CD14-positive monocyte (primary cell): ENCODE measurements at regions of chr18 and their contacts with region 1.

Region 1: DNA sequence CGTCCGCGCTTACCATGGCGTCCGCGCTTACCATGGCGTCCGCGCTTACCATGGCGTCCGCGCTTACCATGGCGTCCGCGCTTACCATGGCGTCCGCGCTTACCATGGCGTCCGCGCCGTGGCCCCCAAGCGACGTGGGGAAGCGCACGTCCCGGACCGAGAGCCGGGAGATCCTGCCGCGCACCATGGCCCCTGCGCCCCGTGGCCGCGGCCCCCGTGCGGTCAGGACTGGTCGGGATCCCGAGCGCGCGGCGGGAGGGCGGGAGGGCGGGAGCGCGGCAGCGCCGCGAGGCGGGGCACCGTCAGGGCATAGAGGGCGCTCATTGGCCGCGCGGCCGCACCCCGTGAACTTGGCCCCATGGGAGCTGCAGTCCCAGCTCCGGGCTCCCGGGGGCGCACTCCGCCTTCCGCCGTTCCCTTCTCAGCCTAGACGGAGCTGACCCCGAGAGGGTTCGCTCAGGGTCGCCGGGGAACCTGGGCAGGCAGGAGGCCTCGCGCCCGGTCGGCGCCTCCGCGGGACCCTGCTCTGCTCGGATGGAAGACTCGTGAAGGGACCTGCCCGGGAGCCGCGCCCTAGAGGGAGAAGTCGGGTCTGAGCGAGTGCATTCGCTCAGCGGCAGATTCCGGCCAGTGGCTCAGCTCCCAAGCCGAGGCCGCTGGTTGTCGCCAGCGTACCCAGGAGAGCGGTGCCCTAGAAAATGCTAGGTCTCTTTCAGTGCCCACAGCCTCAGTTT is at the start of gene ENOSF1:
- DNase-seq: peak; percentile 55 to 78 (median 73)
- H3K4me3 ChIP-seq: peak within 1 kb of the TSS; percentile 64 to 91 (median 77)
- H3K4me3 Mint-ChIP-seq: peak within 1 kb of the TSS; percentile 86 to 92
- H3K27ac ChIP-seq: peak within 1 kb of the TSS; percentile 40 to 78
- H3K27ac Mint-ChIP-seq: peak within 1 kb of the TSS; percentile 69 to 98 (median 93)
- H3K4me1 ChIP-seq: peaks cover 6 to 13% of the 10 kb centered on the region in 2 donors
- H3K4me1 Mint-ChIP-seq: peaks cover 7% of the 10 kb centered on the region
- H3K27me3 ChIP-seq: peaks cover 7 to 31% of the 10 kb centered on the region in 2 donors
- H3K27me3 Mint-ChIP-seq: peaks cover 22 to 47% (median 28%) of the 10 kb centered on the region in 3 donors
- CTCF ChIP-seq: peak; percentile 97
- polyA plus RNA-seq, gene ENOSF1: 2.2 to 11.6 (median 2.3) TPM

Region 2: GRCh38 chr18:267688-268552 is 444.6 kb before region 1 on chr18 and contains the start of gene THOC1:
- intact Hi-C with region 1: loop called in 1 of 2 experiments (anchors 5 kb)
- DNase-seq: peak; percentile 90 to 94 (median 91)
- H3K4me3 ChIP-seq: peak within 1 kb of the TSS; percentile 88 to 98 (median 93)
- H3K4me3 Mint-ChIP-seq: peak within 1 kb of the TSS; percentile 95 to 96
- H3K27ac ChIP-seq: peak within 1 kb of the TSS; percentile 93 to 99
- H3K27ac Mint-ChIP-seq: peak within 1 kb of the TSS; percentile 96 to 100 (median 99)
- H3K4me1 ChIP-seq: peaks cover 15 to 20% of the 10 kb centered on the region in 2 donors
- H3K4me1 Mint-ChIP-seq: peaks cover 23% of the 10 kb centered on the region
- H3K27me3 ChIP-seq: no peaks in the 10 kb centered on the region
- H3K27me3 Mint-ChIP-seq: peaks cover 0 to 8% (median 0%) of the 10 kb centered on the region in 3 donors
- CTCF ChIP-seq: no peak
- polyA plus RNA-seq, gene THOC1: 7.8 to 18.3 (median 8.9) TPM

Region 3: GRCh38 chr18:670522-670921 is 42.0 kb before region 1 on chr18:
- intact Hi-C with region 1: loop called in 1 of 2 experiments (anchors 5 kb)
- DNase-seq: no peak
- H3K4me3 ChIP-seq: no peak overlapping the region
- H3K4me3 Mint-ChIP-seq: no peak overlapping the region
- H3K27ac ChIP-seq: no peak overlapping the region
- H3K27ac Mint-ChIP-seq: peak overlapping the region in 2 of 7 donors; percentile 2 to 69
- H3K4me1 ChIP-seq: no peaks in the 10 kb centered on the region
- H3K4me1 Mint-ChIP-seq: no peaks in the 10 kb centered on the region
- H3K27me3 ChIP-seq: no peaks in the 10 kb centered on the region
- H3K27me3 Mint-ChIP-seq: no peaks in the 10 kb centered on the region
- CTCF ChIP-seq: no peak

Region 4: DNA sequence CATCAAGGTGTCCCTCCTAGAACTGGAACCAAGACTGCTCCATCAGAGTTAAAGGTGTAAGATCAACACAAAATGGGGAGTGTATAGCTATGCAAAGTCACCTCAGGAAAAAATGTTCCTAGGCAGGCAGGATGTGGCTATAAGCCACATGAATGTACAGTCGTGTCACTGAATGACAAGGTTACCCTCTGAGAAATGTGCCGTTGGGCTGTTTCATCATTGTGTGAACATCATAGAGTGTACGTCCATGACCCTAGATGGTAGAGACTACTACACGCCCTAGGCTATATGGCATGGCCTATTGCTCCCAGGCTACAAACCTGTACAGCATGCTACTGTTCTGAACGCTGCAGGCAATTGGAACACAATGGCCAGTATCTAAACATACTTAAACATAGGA is 30.6 kb before region 1 on chr18:
- intact Hi-C with region 1: no loop called
- DNase-seq: no peak
- H3K4me3 ChIP-seq: no peak overlapping the region
- H3K4me3 Mint-ChIP-seq: no peak overlapping the region
- H3K27ac ChIP-seq: no peak overlapping the region
- H3K27ac Mint-ChIP-seq: peak overlapping the region in 1 of 7 donors; percentile 47
- H3K4me1 ChIP-seq: no peaks in the 10 kb centered on the region
- H3K4me1 Mint-ChIP-seq: no peaks in the 10 kb centered on the region
- H3K27me3 ChIP-seq: no peaks in the 10 kb centered on the region
- H3K27me3 Mint-ChIP-seq: no peaks in the 10 kb centered on the region
- CTCF ChIP-seq: no peak